ENCODE measurements at regions of chr13 and their contacts with region 1.

Region 1: GRCh38 chr13:93309886-93310523 is 83.4 kb downstream of the GPC6 start:
- DNase-seq: peak in 1 of 4 experiments; percentile 12
- ATAC-seq: peak; percentile 63
- H3K4me3 ChIP-seq: no peak overlapping the region
- H3K27ac ChIP-seq: no peak overlapping the region
- H3K4me1 ChIP-seq: no peaks in the 10 kb centered on the region
- H3K27me3 ChIP-seq: no peaks in the 10 kb centered on the region; a peak in 1 of 5 replicates
- CTCF ChIP-seq: no peak
- EP300 ChIP-seq: no peak
- POLR2A ChIP-seq: no peak
- RAD21 ChIP-seq: no peak

Region 2: DNA sequence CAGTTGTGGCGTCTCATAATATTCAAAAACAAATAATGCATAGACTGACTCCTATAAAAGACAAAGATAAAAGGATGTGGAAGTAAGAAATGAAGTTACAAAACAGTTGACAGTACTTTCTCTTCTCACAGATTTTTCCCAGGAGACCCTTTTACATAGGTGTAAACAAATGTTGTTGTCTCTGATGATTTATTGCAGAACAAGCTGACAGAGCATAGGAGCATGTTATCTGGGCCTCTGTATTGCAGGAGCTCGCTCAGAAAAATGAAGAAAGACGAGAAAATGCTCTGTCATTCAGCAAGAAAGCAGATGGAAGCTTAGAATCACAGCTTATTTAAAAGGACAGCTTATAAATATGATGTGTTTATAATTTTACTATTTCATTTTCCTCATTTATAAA is 437.0 kb before region 1 on chr13:
- CTCF ChIA-PET with region 1: no interaction called
- POLR2A ChIA-PET with region 1: no interaction called
- in situ Hi-C with region 1: no loop called
- intact Hi-C with region 1: loop called (anchors 5 kb)
- DNase-seq: no peak
- ATAC-seq: no peak
- H3K4me3 ChIP-seq: no peak overlapping the region
- H3K27ac ChIP-seq: no peak overlapping the region
- H3K4me1 ChIP-seq: no peaks in the 10 kb centered on the region
- H3K27me3 ChIP-seq: no peaks in the 10 kb centered on the region
- CTCF ChIP-seq: no peak
- EP300 ChIP-seq: no peak
- POLR2A ChIP-seq: no peak
- RAD21 ChIP-seq: no peak

Region 3: GRCh38 chr13:93413972-93414717 is 104.1 kb after region 1 on chr13:
- CTCF ChIA-PET with region 1: no interaction called
- POLR2A ChIA-PET with region 1: no interaction called
- in situ Hi-C with region 1: no loop called
- intact Hi-C with region 1: no loop called
- DNase-seq: no peak
- ATAC-seq: no peak
- H3K4me3 ChIP-seq: no peak overlapping the region
- H3K27ac ChIP-seq: no peak overlapping the region
- H3K4me1 ChIP-seq: no peaks in the 10 kb centered on the region
- H3K27me3 ChIP-seq: no peaks in the 10 kb centered on the region
- CTCF ChIP-seq: no peak
- EP300 ChIP-seq: no peak
- POLR2A ChIP-seq: no peak
- RAD21 ChIP-seq: no peak

Region 4: DNA sequence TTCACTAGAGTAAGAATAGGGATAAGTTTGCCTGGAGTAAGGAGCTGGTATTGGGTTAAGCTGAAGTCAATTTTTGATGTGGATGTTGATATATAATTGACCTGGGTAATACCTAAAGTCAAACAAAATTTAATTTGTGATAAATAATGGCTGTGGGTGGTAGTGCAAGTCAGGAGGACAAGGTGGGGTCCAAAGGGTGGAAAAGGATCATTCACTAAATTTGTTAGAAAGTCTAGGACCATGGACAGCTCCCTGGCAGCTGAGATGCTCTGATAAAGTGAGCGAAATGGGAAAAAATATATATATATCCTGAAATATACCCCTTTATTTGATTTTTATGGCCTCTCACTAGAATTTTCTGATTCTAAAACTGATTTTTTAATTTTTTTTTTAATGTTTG is 380.1 kb after region 1 on chr13:
- CTCF ChIA-PET with region 1: no interaction called
- POLR2A ChIA-PET with region 1: no interaction called
- in situ Hi-C with region 1: no loop called
- intact Hi-C with region 1: no loop called
- DNase-seq: peak in 1 of 4 experiments; percentile 0
- ATAC-seq: no peak
- H3K4me3 ChIP-seq: no peak overlapping the region
- H3K27ac ChIP-seq: no peak overlapping the region
- H3K4me1 ChIP-seq: no peaks in the 10 kb centered on the region
- H3K27me3 ChIP-seq: no peaks in the 10 kb centered on the region
- CTCF ChIP-seq: no peak
- EP300 ChIP-seq: no peak
- POLR2A ChIP-seq: no peak
- RAD21 ChIP-seq: no peak

Measured in K562 (cell line).